Motor neuron (in vitro differentiated cells): ENCODE measurements at regions of chr16 and their contacts with region 1.

Region 1: DNA sequence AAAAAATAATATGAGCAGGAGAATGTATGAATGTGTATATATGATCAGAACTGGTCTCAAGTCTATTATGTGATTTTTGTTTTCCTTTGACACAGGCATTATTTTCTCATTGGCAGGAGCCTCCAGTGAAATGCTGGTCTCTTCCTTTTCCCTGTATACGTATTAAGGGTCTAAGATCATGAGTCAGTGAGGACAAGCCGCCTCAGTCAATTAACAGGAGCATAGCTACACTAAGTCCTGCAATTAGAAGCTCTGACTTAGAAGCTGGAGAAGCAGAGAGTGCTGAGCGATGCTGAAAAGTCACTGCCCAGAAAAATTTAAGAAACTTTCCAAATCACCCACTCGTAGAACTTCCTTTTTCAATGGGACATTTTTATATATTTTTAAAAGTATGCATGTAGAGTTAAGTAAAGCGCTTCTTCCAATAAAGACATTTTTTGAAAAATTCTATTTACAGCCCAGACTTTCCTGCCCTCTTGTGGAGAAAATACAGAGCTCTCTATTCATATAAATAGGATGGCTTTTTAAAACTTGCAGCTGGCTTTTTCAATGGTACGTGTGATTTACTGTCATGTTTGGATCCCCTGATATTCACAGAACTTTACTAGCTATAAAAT is 70.2 kb upstream of the PSMD7 start:
- ATAC-seq: peak in 7 of 8 experiments; percentile 15 to 67 (median 51)
- H3K4me3 ChIP-seq: no peak overlapping the region
- H3K27ac ChIP-seq: no peak overlapping the region
- H3K4me1 ChIP-seq: peaks cover 6 to 7% of the 10 kb centered on the region in 2 donors

Region 2: GRCh38 chr16:73565262-73565661 is 661.2 kb before region 1 on chr16:
- in situ Hi-C with region 1: loop called in 1 of 9 experiments (anchors 25 kb)
- ATAC-seq: peak in 2 of 8 experiments; percentile 28 to 38
- H3K4me3 ChIP-seq: no peak overlapping the region
- H3K27ac ChIP-seq: no peak overlapping the region
- H3K4me1 ChIP-seq: peaks cover 7 to 12% of the 10 kb centered on the region in 2 donors

Region 3: GRCh38 chr16:74053826-74054225 is 172.6 kb before region 1 on chr16:
- in situ Hi-C with region 1: loop called in 2 of 9 experiments (anchors 10 to 25 kb)
- ATAC-seq: peak in 1 of 8 experiments; percentile 89
- H3K4me3 ChIP-seq: no peak overlapping the region
- H3K27ac ChIP-seq: no peak overlapping the region
- H3K4me1 ChIP-seq: no peaks in the 10 kb centered on the region

Region 4: DNA sequence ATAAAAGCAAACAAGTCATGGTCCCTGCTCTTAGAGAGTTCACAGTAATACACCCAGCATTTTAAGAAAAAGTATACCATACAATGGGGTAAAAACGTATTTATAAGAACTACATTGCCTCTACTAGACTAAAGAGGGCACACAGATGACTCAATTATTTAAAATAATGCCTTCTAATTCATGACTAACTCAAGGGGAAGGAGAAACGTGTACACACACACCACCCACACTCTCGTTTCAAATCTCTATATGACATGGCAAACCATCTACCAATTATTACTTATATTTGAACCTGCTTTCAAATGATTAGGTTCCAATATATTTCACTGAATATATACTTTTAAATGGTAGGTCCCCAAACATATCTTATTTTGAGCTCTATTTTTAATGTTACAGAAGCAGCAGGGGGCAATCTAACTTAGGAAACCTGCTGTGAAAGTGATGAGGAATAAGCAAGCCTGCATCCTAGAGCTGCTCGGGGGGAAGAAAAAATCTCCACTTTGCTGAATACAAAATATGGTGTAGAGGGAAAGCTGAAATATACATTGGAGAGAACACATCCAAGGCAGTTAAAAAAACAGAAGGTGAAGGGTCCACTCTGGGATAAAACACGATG is 162.2 kb before region 1 on chr16:
- in situ Hi-C with region 1: loop called in 2 of 9 experiments (anchors 10 to 25 kb)
- ATAC-seq: peak in 2 of 8 experiments; percentile 39 to 47
- H3K4me3 ChIP-seq: no peak overlapping the region
- H3K27ac ChIP-seq: no peak overlapping the region
- H3K4me1 ChIP-seq: peaks cover 8 to 12% of the 10 kb centered on the region in 2 donors

Region 5: GRCh38 chr16:74123826-74124225 is 102.6 kb before region 1 on chr16:
- in situ Hi-C with region 1: no loop called
- ATAC-seq: no peak
- H3K4me3 ChIP-seq: no peak overlapping the region
- H3K27ac ChIP-seq: no peak overlapping the region
- H3K4me1 ChIP-seq: no peaks in the 10 kb centered on the region